Heart left ventricle (tissue), 16 donors: ENCODE measurements at regions of chr6 and their contacts with region 1.

Region 1: GRCh38 chr6:144095331-144096002 is at the start of gene SF3B5:
- DNase-seq: peak; percentile 98 to 99 (median 99)
- ATAC-seq: peak; percentile 100
- H3K4me3 ChIP-seq: peak within 1 kb of the TSS; percentile 49 to 95 (median 89)
- H3K27ac ChIP-seq: peak within 1 kb of the TSS in 11 of 12 donors; percentile 68 to 87 (median 83)
- H3K4me1 ChIP-seq: peaks cover 0 to 28% (median 14%) of the 10 kb centered on the region in 12 donors
- H3K27me3 ChIP-seq: no peaks in the 10 kb centered on the region
- CTCF ChIP-seq: no peak
- POLR2A ChIP-seq: peak in 1 of 2 donors; percentile 62
- total RNA-seq, gene SF3B5: 99.5 to 240 (median 124) TPM

Region 2: GRCh38 chr6:144063744-144064401 is 31.6 kb before region 1 on chr6:
- intact Hi-C with region 1: loop called in 1 of 10 experiments (anchors 1 kb)
- DNase-seq: peak; percentile 84 to 93 (median 87)
- ATAC-seq: peak; percentile 79 to 98 (median 96)
- H3K4me3 ChIP-seq: peak overlapping the region; percentile 52 to 81 (median 70)
- H3K27ac ChIP-seq: peak overlapping the region in 8 of 12 donors; percentile 3 to 89 (median 44)
- H3K4me1 ChIP-seq: peaks cover 0 to 23% (median 14%) of the 10 kb centered on the region in 12 donors
- H3K27me3 ChIP-seq: peaks cover 0 to 39% (median 3%) of the 10 kb centered on the region in 9 donors
- CTCF ChIP-seq: peak in 9 of 12 donors; percentile 6 to 49 (median 33)
- POLR2A ChIP-seq: peak in 1 of 2 donors; percentile 61